Psoas muscle (tissue), 8 donors: ENCODE measurements at regions of chr1 and their contacts with region 1.

Region 1: GRCh38 chr1:95216292-95216990 is 17.6 kb upstream of the RWDD3 start:
- DNase-seq: no peak
- ATAC-seq: no peak
- H3K4me3 ChIP-seq: no peak overlapping the region
- H3K27ac ChIP-seq: no peak overlapping the region
- H3K4me1 ChIP-seq: no peaks in the 10 kb centered on the region
- H3K27me3 ChIP-seq: no peaks in the 10 kb centered on the region
- CTCF ChIP-seq: no peak

Region 2: GRCh38 chr1:93715529-93716126 is 1500.8 kb before region 1 on chr1:
- intact Hi-C with region 1: loop called in 1 of 2 experiments (anchors 5 kb)
- DNase-seq: no peak
- ATAC-seq: peak; percentile 64 to 81 (median 72)
- H3K4me3 ChIP-seq: peak overlapping the region; percentile 11
- H3K27ac ChIP-seq: peak overlapping the region; percentile 41
- H3K4me1 ChIP-seq: peaks cover 14% of the 10 kb centered on the region
- H3K27me3 ChIP-seq: no peaks in the 10 kb centered on the region
- CTCF ChIP-seq: no peak

Region 3: DNA sequence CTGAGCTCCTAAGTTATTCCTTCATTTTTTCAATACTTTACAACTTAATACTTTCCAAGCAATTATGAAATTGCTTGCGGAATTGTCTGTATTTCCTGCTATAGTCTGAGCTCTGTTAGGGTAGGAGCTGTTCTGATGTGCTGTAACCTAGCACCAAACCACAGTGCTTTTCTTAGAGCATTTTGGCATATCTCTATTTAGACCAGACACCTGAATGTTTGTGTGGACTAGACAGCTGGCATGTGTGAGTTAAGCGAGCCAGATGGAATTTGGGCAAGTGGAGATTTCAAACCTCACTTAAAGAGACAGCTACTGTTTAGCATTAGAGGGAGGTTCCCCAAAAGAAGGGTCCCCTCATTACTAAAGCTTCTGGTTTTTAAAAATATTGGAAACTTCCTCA is 123.6 kb after region 1 on chr1:
- intact Hi-C with region 1: no loop called
- DNase-seq: no peak
- ATAC-seq: peak; percentile 64 to 92 (median 75)
- H3K4me3 ChIP-seq: peak overlapping the region; percentile 23
- H3K27ac ChIP-seq: no peak overlapping the region
- H3K4me1 ChIP-seq: peaks cover 10% of the 10 kb centered on the region
- H3K27me3 ChIP-seq: no peaks in the 10 kb centered on the region
- CTCF ChIP-seq: no peak